ENCODE measurements at regions of chr6 and their contacts with region 1.

Region 1: DNA sequence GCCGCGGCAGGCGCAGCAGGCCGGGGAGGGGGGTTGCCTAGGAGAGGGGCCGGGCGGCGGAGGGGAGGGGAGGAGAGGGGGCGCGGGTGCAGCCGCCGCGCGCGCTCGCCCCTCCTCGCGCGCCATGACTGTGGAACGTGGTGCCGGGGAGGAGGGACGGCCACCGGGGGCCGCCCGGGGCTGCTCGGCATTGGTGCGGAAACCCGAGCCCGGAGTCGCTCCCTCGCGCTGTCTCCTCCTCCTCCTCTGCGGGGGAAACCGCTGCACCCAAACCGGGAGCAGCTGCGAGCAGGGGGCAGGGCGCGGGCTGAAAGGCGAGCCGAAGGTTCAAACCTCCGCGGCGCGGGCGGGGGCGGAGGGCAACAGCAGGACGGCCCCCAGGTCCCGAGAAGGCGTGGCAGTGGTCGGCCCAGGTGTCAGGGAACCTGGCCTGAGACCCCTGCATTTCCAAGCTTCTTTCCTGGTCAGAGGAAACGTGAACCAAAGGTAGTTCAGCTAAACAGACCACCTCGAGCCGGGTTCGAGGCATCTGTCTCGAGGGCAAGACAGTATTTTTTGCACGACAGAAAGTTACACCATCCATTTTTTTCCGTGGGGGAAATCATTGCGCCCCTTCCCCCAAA is 1.4 kb upstream of the TRERF1 start:
- DNase-seq: peak; percentile 94
- H3K4me3 Mint-ChIP-seq: peak overlapping the region; percentile 99
- H3K27ac Mint-ChIP-seq: peak overlapping the region; percentile 93
- H3K4me1 Mint-ChIP-seq: peaks cover 35% of the 10 kb centered on the region
- H3K27me3 Mint-ChIP-seq: peaks cover 11% of the 10 kb centered on the region

Region 2: GRCh38 chr6:41958022-41958856 is 494.9 kb before region 1 on chr6:
- intact Hi-C with region 1: no loop called
- DNase-seq: no peak
- H3K4me3 Mint-ChIP-seq: peak overlapping the region; percentile 75
- H3K27ac Mint-ChIP-seq: peak overlapping the region; percentile 98
- H3K4me1 Mint-ChIP-seq: peaks cover 39% of the 10 kb centered on the region
- H3K27me3 Mint-ChIP-seq: no peaks in the 10 kb centered on the region

Region 3: DNA sequence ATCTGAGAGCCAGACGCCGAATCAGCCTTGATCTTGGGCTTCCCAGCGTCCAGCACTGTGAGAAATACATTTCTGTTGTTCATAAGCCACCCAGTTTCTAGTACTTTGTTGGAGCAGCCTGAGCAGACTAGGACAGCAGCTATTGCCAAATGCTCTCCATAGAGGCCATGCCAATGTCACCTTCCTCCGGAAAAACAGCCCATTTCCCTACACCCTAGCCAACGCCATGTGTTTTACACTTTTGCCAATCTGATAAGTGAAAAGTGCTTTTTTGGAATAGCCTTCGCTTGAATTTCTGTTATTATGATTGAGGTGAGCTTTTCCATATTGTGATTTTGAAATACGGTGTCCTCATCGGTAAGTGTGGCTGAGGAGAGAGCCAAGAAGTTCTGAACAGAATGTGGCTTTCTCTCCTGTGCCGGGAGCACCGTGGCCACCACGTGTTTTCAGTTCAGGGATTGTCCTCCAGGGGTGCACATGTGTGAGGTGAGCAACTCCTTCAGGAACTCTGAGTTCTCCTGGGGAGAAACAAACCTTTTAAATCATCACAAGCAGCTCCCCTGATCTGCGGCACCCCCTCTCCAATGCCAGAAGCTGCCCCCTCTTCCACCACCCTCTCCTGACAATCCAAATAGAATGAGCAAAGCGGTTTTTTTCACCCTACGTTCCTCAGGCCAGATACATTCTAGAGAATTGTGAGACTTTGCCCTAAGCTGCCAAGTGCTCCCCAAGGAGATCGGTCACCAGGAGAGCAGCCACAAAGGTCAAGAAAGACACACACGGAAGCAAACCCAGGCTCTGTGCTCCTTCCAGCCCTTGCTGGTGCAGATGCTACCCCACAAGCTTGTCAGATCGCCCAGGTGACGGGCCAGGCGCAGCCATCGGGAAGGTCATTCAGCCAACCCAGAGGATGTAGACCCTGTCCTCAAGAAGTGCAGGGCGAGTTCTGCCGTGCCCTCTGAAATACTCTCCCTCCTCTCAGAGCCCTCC is 366.8 kb before region 1 on chr6:
- intact Hi-C with region 1: no loop called
- DNase-seq: no peak
- H3K4me3 Mint-ChIP-seq: no peak overlapping the region
- H3K27ac Mint-ChIP-seq: no peak overlapping the region
- H3K4me1 Mint-ChIP-seq: peaks cover 1% of the 10 kb centered on the region
- H3K27me3 Mint-ChIP-seq: no peaks in the 10 kb centered on the region

Region 4: DNA sequence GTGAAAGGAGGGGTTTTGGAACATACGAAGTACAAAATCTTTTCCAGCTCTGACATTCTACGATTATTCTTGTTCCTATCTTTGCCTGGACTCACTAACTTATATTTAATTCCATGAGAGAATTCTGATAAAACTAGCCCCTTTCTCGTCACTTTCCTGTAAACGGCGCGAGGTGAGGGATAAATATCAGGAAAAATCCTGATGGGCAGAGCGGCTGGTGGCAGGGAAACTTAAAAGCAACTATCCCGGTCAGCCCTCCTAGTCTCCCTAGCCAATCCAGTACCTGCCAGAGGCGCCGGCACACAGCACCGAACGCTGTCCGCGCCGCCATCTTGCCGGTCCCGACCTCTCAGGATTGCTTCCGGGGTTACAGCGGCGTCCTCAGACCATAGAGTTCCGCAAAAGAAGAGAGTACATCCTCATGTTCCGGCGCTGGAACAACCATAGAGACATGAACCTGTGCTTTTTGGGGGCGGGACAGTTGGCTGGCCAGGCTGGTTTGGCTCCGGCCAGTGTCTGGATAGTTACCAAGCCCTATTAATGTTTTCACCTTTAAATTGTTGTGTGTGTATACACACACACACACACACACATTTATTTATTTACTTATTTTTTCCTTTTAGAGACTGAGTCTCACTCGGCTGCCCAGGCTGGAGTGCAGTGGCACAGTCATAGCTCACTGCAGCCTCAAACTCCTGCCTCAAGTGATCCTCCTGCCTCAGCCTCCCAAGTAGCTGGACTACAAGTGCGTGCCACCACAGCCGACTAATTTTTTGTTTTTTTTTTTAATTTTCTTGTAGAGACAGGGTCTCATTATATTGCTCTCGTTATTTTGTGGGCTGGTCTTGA is 235.4 kb before region 1 on chr6 and contains the start of gene MRPS10:
- intact Hi-C with region 1: loop called (anchors 5 kb)
- DNase-seq: peak; percentile 97
- H3K4me3 Mint-ChIP-seq: peak within 1 kb of the TSS; percentile 98
- H3K27ac Mint-ChIP-seq: peak within 1 kb of the TSS; percentile 93
- H3K4me1 Mint-ChIP-seq: peaks cover 21% of the 10 kb centered on the region
- H3K27me3 Mint-ChIP-seq: no peaks in the 10 kb centered on the region
- total RNA-seq, gene MRPS10: 49.4 and 50.8 TPM in 2 replicates

Region 5: DNA sequence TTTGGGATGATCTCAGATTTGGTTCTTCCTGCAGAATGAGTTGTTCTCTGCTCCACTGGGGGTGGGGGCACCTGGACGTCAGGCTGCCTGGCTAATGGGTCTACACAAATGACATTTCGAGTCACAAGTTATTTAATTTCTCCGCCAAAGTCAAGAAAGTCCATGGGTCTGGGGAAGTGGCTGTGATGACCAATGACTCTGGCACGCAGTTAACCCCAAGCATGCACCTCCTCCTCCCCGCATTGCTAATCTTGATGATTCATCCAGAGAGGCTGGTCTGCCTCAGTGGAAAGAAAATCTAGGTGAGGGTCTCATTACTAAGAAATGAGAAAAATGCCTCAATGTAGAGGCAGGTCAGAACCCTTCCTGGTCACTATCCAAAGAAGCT is 137.2 kb before region 1 on chr6:
- intact Hi-C with region 1: loop called (anchors 5 kb)
- DNase-seq: no peak
- H3K4me3 Mint-ChIP-seq: peak overlapping the region; percentile 7
- H3K27ac Mint-ChIP-seq: peak overlapping the region; percentile 85
- H3K4me1 Mint-ChIP-seq: peaks cover 47% of the 10 kb centered on the region
- H3K27me3 Mint-ChIP-seq: no peaks in the 10 kb centered on the region

Region 6: DNA sequence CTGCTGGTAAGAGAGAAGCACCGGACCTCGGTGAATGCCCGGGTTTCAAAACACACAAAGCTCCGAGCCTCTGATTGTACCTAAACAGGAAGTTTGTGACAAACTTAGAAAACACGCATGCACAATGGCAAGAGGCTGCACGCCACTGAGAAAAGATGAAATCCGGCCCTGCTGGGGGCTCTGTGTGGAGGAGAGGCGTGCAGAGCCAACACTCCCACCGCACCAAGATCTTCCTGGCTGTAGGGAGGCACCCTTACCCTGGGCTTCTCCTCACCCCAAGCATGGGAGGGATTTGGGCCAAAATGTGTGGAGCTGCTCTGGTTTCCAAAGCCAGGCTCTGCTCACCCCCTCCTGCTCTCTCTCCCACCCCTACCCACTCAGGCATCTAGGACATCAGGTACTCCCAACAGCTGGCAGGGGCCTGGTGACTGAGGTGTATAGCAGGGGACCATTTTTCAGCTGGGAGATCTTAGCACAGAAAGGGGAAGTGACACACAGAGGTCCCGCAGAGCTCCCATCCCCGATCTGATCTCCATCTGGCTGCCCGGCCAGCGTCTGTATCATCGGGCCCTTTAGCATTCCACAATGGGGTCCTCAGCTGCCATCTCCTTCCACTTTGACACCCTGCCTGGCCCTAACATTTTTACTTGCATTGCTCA is 85.7 kb before region 1 on chr6:
- intact Hi-C with region 1: loop called (anchors 1 kb)
- DNase-seq: peak; percentile 82
- H3K4me3 Mint-ChIP-seq: peak overlapping the region; percentile 72
- H3K27ac Mint-ChIP-seq: peak overlapping the region; percentile 89
- H3K4me1 Mint-ChIP-seq: peaks cover 71% of the 10 kb centered on the region
- H3K27me3 Mint-ChIP-seq: no peaks in the 10 kb centered on the region

Region 7: GRCh38 chr6:42423244-42423643 is 29.9 kb before region 1 on chr6:
- intact Hi-C with region 1: loop called (anchors 2 kb)
- DNase-seq: peak; percentile 72
- H3K4me3 Mint-ChIP-seq: peak overlapping the region; percentile 52
- H3K27ac Mint-ChIP-seq: peak overlapping the region; percentile 10
- H3K4me1 Mint-ChIP-seq: peaks cover 50% of the 10 kb centered on the region
- H3K27me3 Mint-ChIP-seq: no peaks in the 10 kb centered on the region

Region 8: GRCh38 chr6:42547407-42548329 is 94.5 kb after region 1 on chr6:
- intact Hi-C with region 1: loop called (anchors 2 kb)
- DNase-seq: peak; percentile 96
- H3K4me3 Mint-ChIP-seq: peak overlapping the region; percentile 74
- H3K27ac Mint-ChIP-seq: peak overlapping the region; percentile 70
- H3K4me1 Mint-ChIP-seq: peaks cover 14% of the 10 kb centered on the region
- H3K27me3 Mint-ChIP-seq: peaks cover 11% of the 10 kb centered on the region